ENCODE measurements at regions of chr17 and their contacts with region 1.

Region 1: GRCh38 chr17:60599620-60600489 is at the start of gene PPM1D:
- DNase-seq: peak; percentile 99
- ATAC-seq: peak; percentile 89
- H3K4me3 ChIP-seq: peak within 1 kb of the TSS; percentile 86 to 99 (median 98)
- H3K27ac ChIP-seq: peak within 1 kb of the TSS; percentile 98
- H3K4me1 ChIP-seq: peaks cover 31% of the 10 kb centered on the region
- H3K27me3 ChIP-seq: no peaks in the 10 kb centered on the region; a peak in 1 of 5 replicates
- CTCF ChIP-seq: peak; percentile 38
- EP300 ChIP-seq: peak; percentile 21 to 34; a peak in 2 of 4 replicates
- POLR2A ChIP-seq: peak; percentile 84 to 88
- RAD21 ChIP-seq: peak; percentile 60
- total RNA-seq, gene PPM1D: 26.2 and 32.3 TPM in 2 replicates

Region 2: GRCh38 chr17:60525685-60526514 is 74.0 kb before region 1 on chr17 and contains the start of gene APPBP2:
- CTCF ChIA-PET with region 1: no interaction called
- POLR2A ChIA-PET with region 1: interaction called, 22 read pairs
- in situ Hi-C with region 1: no loop called
- intact Hi-C with region 1: no loop called
- DNase-seq: peak; percentile 83
- ATAC-seq: peak; percentile 96
- H3K4me3 ChIP-seq: peak within 1 kb of the TSS; percentile 93 to 98 (median 95)
- H3K27ac ChIP-seq: peak within 1 kb of the TSS; percentile 96
- H3K4me1 ChIP-seq: peaks cover 38% of the 10 kb centered on the region
- H3K27me3 ChIP-seq: peaks cover 0 to 4% of the 10 kb centered on the region in 2 experiments; a peak in 1 of 5 replicates
- CTCF ChIP-seq: 0 out of 2 replicates have a peak, but pooled peaks have one; percentile 19
- EP300 ChIP-seq: peak in 1 of 2 experiments; percentile 28; a peak in 2 of 4 replicates
- POLR2A ChIP-seq: peak; percentile 91 to 94
- RAD21 ChIP-seq: peak; percentile 51
- total RNA-seq, gene APPBP2: 45.8 and 68.8 TPM in 2 replicates

Region 3: GRCh38 chr17:60559995-60560859 is 39.6 kb before region 1 on chr17:
- CTCF ChIA-PET with region 1: no interaction called
- POLR2A ChIA-PET with region 1: interaction called, 42 read pairs
- in situ Hi-C with region 1: no loop called
- intact Hi-C with region 1: no loop called
- DNase-seq: peak; percentile 92
- ATAC-seq: peak; percentile 88
- H3K4me3 ChIP-seq: peak overlapping the region; percentile 61 to 77 (median 64)
- H3K27ac ChIP-seq: peak overlapping the region; percentile 82
- H3K4me1 ChIP-seq: peaks cover 38% of the 10 kb centered on the region
- H3K27me3 ChIP-seq: no peaks in the 10 kb centered on the region; a peak in 1 of 5 replicates
- CTCF ChIP-seq: peak; percentile 11; the same call in 1 of the 2 replicates
- EP300 ChIP-seq: peak; percentile 40 to 68; a peak in 2 of 4 replicates
- POLR2A ChIP-seq: peak; percentile 62 to 87
- RAD21 ChIP-seq: no peak; the same call in 1 of the 2 replicates

Region 4: GRCh38 chr17:60577147-60577915 is 22.5 kb before region 1 on chr17:
- CTCF ChIA-PET with region 1: no interaction called
- POLR2A ChIA-PET with region 1: interaction called, 10 read pairs
- in situ Hi-C with region 1: no loop called
- intact Hi-C with region 1: no loop called
- DNase-seq: peak; percentile 17
- ATAC-seq: peak; percentile 95
- H3K4me3 ChIP-seq: peak overlapping the region; percentile 29 to 46 (median 39); a peak in 5 of 6 replicates
- H3K27ac ChIP-seq: peak overlapping the region; percentile 21
- H3K4me1 ChIP-seq: no peaks in the 10 kb centered on the region
- H3K27me3 ChIP-seq: no peaks in the 10 kb centered on the region
- CTCF ChIP-seq: peak; percentile 61
- EP300 ChIP-seq: no peak
- POLR2A ChIP-seq: no peak
- RAD21 ChIP-seq: no peak

Region 5: DNA sequence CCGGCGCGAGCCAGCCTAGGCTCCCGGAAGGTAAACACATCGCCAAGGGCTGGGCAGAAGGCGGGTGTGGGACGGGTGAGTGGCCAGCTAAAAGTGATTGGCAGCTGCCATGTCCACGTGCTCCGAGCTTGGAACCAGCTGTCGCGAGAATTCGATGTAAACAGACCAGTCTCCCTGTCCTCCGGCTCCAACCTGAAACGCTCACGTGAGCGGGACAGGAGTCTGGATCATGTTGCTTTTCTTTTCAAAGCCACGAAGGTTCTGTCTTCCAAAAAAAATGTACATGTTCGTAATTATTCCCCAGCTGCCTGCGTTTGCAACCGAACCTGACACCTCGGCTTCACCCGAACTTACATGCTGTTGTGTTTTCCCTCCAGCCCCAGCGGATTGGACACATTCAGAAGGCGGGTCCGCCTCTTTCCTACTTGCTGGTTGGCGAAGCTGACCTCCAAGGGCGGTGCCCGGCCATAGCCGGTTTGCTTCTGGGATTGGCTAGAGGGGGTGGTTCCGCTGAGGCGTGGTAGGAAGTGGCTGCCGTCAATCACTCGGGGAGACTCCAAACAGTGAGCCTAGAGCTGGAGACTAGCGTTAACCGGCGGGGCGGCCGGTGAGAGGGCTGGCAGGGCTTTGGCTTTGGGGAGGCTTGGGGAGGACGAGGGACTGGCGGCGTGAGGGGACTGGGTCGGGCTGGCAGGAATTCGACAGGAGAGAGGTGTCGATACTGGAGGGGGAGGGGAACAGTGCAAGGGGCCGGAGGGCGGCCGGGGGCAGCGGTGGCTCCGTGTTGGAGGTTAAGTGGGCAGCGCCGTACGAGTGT is 77.7 kb after region 1 on chr17 and contains the start of gene BCAS3:
- CTCF ChIA-PET with region 1: no interaction called
- POLR2A ChIA-PET with region 1: interaction called, 21 read pairs
- in situ Hi-C with region 1: no loop called
- intact Hi-C with region 1: loop called (anchors 2 kb)
- DNase-seq: peak; percentile 100
- ATAC-seq: peak; percentile 98
- H3K4me3 ChIP-seq: peak within 1 kb of the TSS; percentile 68 to 77 (median 75)
- H3K27ac ChIP-seq: peak within 1 kb of the TSS; percentile 56
- H3K4me1 ChIP-seq: peaks cover 7% of the 10 kb centered on the region
- H3K27me3 ChIP-seq: no peaks in the 10 kb centered on the region; a peak in 1 of 5 replicates
- CTCF ChIP-seq: peak; percentile 21; the same call in 1 of the 2 replicates
- EP300 ChIP-seq: 0 out of 4 replicates have a peak, but pooled peaks of 1 of the 2 experiments have one; percentile 44
- POLR2A ChIP-seq: peak; percentile 87 to 94
- RAD21 ChIP-seq: no peak
- total RNA-seq, gene BCAS3: 10.7 and 15.8 TPM in 2 replicates

Measured in HepG2 (cell line).